B cell (primary cell): ENCODE measurements at regions of chr1 and their contacts with region 1.

Region 1: DNA sequence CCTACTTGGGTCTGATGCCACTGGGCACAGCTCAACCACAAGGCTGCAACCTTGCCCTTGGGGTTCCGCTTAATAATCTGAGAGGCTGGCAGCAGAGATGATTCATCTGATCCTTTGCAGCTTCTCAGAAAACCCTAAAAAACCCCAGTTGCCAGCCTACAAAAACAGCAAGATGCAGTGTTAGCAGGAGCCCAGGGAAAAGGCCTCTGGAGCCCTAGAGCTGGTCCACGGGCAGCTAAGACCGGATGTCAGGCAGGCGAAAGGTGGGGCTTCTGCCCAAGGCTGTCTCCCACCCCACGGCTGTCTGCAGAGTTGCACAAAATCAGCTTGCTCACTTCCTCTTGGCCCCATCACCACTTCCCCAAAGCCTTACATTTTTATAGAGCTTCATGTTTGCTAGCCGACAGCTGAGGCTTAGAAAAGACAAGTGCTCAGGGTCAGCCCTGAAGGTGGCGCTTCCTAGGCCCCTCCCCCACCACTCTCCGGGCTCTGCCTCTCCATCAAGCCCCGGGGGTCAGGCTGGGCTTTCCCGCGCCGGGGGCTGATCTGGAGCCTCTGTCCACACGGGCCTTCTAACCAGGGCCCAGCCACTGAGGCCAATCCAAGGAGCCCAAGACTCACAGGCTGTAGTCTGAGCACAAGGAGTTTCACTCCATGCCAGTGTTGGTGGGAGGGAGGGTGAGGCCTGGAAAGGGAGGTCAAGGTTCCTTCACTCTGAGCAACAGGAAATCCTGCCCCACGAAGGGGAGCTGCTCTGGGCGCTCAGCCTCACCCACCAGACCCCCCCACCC is 4.2 kb upstream of the ADORA3 start:
- DNase-seq: peak; percentile 90
- ATAC-seq: peak; percentile 70
- H3K4me3 ChIP-seq: peak overlapping the region; percentile 12 to 62 (median 59)
- H3K4me3 Mint-ChIP-seq: peak overlapping the region; percentile 79
- H3K27ac ChIP-seq: peak overlapping the region; percentile 88 to 98
- H3K27ac Mint-ChIP-seq: peak overlapping the region; percentile 95
- H3K4me1 ChIP-seq: peaks cover 64 to 69% of the 10 kb centered on the region in 2 donors
- H3K4me1 Mint-ChIP-seq: peaks cover 57% of the 10 kb centered on the region
- H3K27me3 ChIP-seq: no peaks in the 10 kb centered on the region
- H3K27me3 Mint-ChIP-seq: no peaks in the 10 kb centered on the region
- CTCF ChIP-seq: no peak

Region 2: GRCh38 chr1:110857964-110858948 is 649.4 kb before region 1 on chr1:
- CTCF ChIA-PET with region 1: no interaction called
- POLR2A ChIA-PET with region 1: no interaction called
- intact Hi-C with region 1: no loop called
- DNase-seq: no peak
- ATAC-seq: peak; percentile 54
- H3K4me3 ChIP-seq: peak overlapping the region in 1 of 5 experiments; percentile 3
- H3K4me3 Mint-ChIP-seq: peak overlapping the region; percentile 57
- H3K27ac ChIP-seq: peak overlapping the region; percentile 8 to 25
- H3K27ac Mint-ChIP-seq: peak overlapping the region; percentile 88
- H3K4me1 ChIP-seq: peaks cover 20 to 36% of the 10 kb centered on the region in 2 donors
- H3K4me1 Mint-ChIP-seq: peaks cover 41% of the 10 kb centered on the region
- H3K27me3 ChIP-seq: no peaks in the 10 kb centered on the region
- H3K27me3 Mint-ChIP-seq: no peaks in the 10 kb centered on the region
- CTCF ChIP-seq: no peak

Region 3: GRCh38 chr1:111448918-111449702 is 58.5 kb before region 1 on chr1 and contains the starts of genes ATP5PB and WDR77:
- CTCF ChIA-PET with region 1: interaction called, 22 read pairs
- POLR2A ChIA-PET with region 1: interaction called, 8 read pairs
- intact Hi-C with region 1: loop called (anchors 2 kb)
- DNase-seq: peak; percentile 96
- ATAC-seq: peak; percentile 95
- H3K4me3 ChIP-seq: peak within 1 kb of the TSS; percentile 76 to 94 (median 85)
- H3K4me3 Mint-ChIP-seq: peak within 1 kb of the TSS; percentile 100
- H3K27ac ChIP-seq: peak within 1 kb of the TSS; percentile 60 to 95
- H3K27ac Mint-ChIP-seq: peak within 1 kb of the TSS; percentile 99
- H3K4me1 ChIP-seq: peaks cover 41 to 48% of the 10 kb centered on the region in 2 donors
- H3K4me1 Mint-ChIP-seq: peaks cover 73% of the 10 kb centered on the region
- H3K27me3 ChIP-seq: no peaks in the 10 kb centered on the region
- H3K27me3 Mint-ChIP-seq: no peaks in the 10 kb centered on the region
- CTCF ChIP-seq: no peak
- total RNA-seq, gene ATP5PB: 110 and 113 TPM in 2 replicates
- total RNA-seq, gene WDR77: 40.5 and 41.4 TPM in 2 replicates

Region 4: GRCh38 chr1:111559736-111560279 is 52.2 kb after region 1 on chr1:
- CTCF ChIA-PET with region 1: interaction called, 10 read pairs
- POLR2A ChIA-PET with region 1: no interaction called
- intact Hi-C with region 1: no loop called
- DNase-seq: no peak
- ATAC-seq: no peak
- H3K4me3 ChIP-seq: no peak overlapping the region
- H3K4me3 Mint-ChIP-seq: no peak overlapping the region
- H3K27ac ChIP-seq: no peak overlapping the region
- H3K27ac Mint-ChIP-seq: no peak overlapping the region
- H3K4me1 ChIP-seq: no peaks in the 10 kb centered on the region
- H3K4me1 Mint-ChIP-seq: no peaks in the 10 kb centered on the region
- H3K27me3 ChIP-seq: no peaks in the 10 kb centered on the region
- H3K27me3 Mint-ChIP-seq: no peaks in the 10 kb centered on the region
- CTCF ChIP-seq: no peak

Region 5: GRCh38 chr1:111628153-111628552 is 120.5 kb after region 1 on chr1:
- CTCF ChIA-PET with region 1: interaction called, 48 read pairs
- POLR2A ChIA-PET with region 1: no interaction called
- intact Hi-C with region 1: no loop called
- DNase-seq: no peak
- ATAC-seq: no peak
- H3K4me3 ChIP-seq: no peak overlapping the region
- H3K4me3 Mint-ChIP-seq: peak overlapping the region; percentile 54
- H3K27ac ChIP-seq: peak overlapping the region in 1 of 2 donors; percentile 67
- H3K27ac Mint-ChIP-seq: peak overlapping the region; percentile 72
- H3K4me1 ChIP-seq: peaks cover 46 to 68% of the 10 kb centered on the region in 2 donors
- H3K4me1 Mint-ChIP-seq: peaks cover 78% of the 10 kb centered on the region
- H3K27me3 ChIP-seq: no peaks in the 10 kb centered on the region
- H3K27me3 Mint-ChIP-seq: no peaks in the 10 kb centered on the region
- CTCF ChIP-seq: no peak

Region 6: GRCh38 chr1:111699268-111699667 is 191.7 kb after region 1 on chr1:
- CTCF ChIA-PET with region 1: interaction called, 23 read pairs
- POLR2A ChIA-PET with region 1: no interaction called
- intact Hi-C with region 1: no loop called
- DNase-seq: peak; percentile 36
- ATAC-seq: peak; percentile 45
- H3K4me3 ChIP-seq: no peak overlapping the region
- H3K4me3 Mint-ChIP-seq: no peak overlapping the region
- H3K27ac ChIP-seq: peak overlapping the region in 1 of 2 donors; percentile 65
- H3K27ac Mint-ChIP-seq: no peak overlapping the region
- H3K4me1 ChIP-seq: peaks cover 13 to 25% of the 10 kb centered on the region in 2 donors
- H3K4me1 Mint-ChIP-seq: peaks cover 28% of the 10 kb centered on the region
- H3K27me3 ChIP-seq: no peaks in the 10 kb centered on the region
- H3K27me3 Mint-ChIP-seq: no peaks in the 10 kb centered on the region
- CTCF ChIP-seq: no peak

Region 7: GRCh38 chr1:111762332-111762731 is 254.7 kb after region 1 on chr1:
- CTCF ChIA-PET with region 1: interaction called, 17 read pairs
- POLR2A ChIA-PET with region 1: no interaction called
- intact Hi-C with region 1: no loop called
- DNase-seq: no peak
- ATAC-seq: no peak
- H3K4me3 ChIP-seq: no peak overlapping the region
- H3K4me3 Mint-ChIP-seq: no peak overlapping the region
- H3K27ac ChIP-seq: no peak overlapping the region
- H3K27ac Mint-ChIP-seq: no peak overlapping the region
- H3K4me1 ChIP-seq: no peaks in the 10 kb centered on the region
- H3K4me1 Mint-ChIP-seq: peaks cover 6% of the 10 kb centered on the region
- H3K27me3 ChIP-seq: no peaks in the 10 kb centered on the region
- H3K27me3 Mint-ChIP-seq: no peaks in the 10 kb centered on the region
- CTCF ChIP-seq: no peak